Activated naive CD4-positive, alpha-beta T cell treated with anti-CD3 and anti-CD28 coated beads for 36 hours (primary cell): ENCODE measurements at regions of chr12 and their contacts with region 1.

Region 1: GRCh38 chr12:50763639-50764285 is at the start of gene ATF1:
- DNase-seq: peak; percentile 91
- H3K4me3 Mint-ChIP-seq: peak within 1 kb of the TSS; percentile 83
- H3K27ac Mint-ChIP-seq: peak within 1 kb of the TSS; percentile 94
- H3K4me1 Mint-ChIP-seq: peaks cover 33% of the 10 kb centered on the region
- H3K27me3 Mint-ChIP-seq: no peaks in the 10 kb centered on the region
- total RNA-seq, gene ATF1: 43.3 to 48.5 TPM

Region 2: GRCh38 chr12:50283229-50283923 is 480.4 kb before region 1 on chr12 and contains the start of gene LIMA1:
- CTCF ChIA-PET with region 1: interaction called, 3 read pairs
- intact Hi-C with region 1: loop called (anchors 1 kb)
- DNase-seq: peak; percentile 92
- H3K4me3 Mint-ChIP-seq: peak within 1 kb of the TSS; percentile 90
- H3K27ac Mint-ChIP-seq: peak within 1 kb of the TSS; percentile 72
- H3K4me1 Mint-ChIP-seq: peaks cover 13% of the 10 kb centered on the region
- H3K27me3 Mint-ChIP-seq: no peaks in the 10 kb centered on the region
- total RNA-seq, gene LIMA1: 15.9 to 16.5 TPM

Region 3: DNA sequence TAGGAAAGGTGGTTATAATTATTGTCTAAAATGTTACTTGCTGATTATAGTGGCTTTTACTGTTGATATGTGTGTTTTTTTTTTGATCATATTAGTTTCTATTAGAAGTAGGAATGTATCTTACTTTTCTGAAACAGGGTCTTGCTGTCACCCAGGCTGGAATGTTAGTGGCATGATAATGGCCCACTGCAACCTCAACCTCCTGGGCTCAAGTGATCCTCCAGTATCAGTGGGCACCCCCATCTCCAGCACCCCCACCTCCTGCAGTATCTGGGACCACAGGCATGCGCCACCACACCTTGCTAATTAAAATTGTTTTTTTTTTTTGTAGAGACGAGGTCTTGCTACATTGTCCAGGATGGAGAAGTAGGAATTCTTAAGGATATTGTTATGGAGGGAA is 11.5 kb after region 1 on chr12:
- CTCF ChIA-PET with region 1: interaction called, 12 read pairs
- intact Hi-C with region 1: no loop called
- DNase-seq: no peak
- H3K4me3 Mint-ChIP-seq: no peak overlapping the region
- H3K27ac Mint-ChIP-seq: no peak overlapping the region
- H3K4me1 Mint-ChIP-seq: peaks cover 30% of the 10 kb centered on the region
- H3K27me3 Mint-ChIP-seq: no peaks in the 10 kb centered on the region

Region 4: GRCh38 chr12:50986966-50987737 is 223.4 kb after region 1 on chr12:
- CTCF ChIA-PET with region 1: interaction called, 21 read pairs
- intact Hi-C with region 1: loop called (anchors 1 kb)
- DNase-seq: peak; percentile 64
- H3K4me3 Mint-ChIP-seq: no peak overlapping the region
- H3K27ac Mint-ChIP-seq: no peak overlapping the region
- H3K4me1 Mint-ChIP-seq: peaks cover 56% of the 10 kb centered on the region
- H3K27me3 Mint-ChIP-seq: no peaks in the 10 kb centered on the region

Region 5: DNA sequence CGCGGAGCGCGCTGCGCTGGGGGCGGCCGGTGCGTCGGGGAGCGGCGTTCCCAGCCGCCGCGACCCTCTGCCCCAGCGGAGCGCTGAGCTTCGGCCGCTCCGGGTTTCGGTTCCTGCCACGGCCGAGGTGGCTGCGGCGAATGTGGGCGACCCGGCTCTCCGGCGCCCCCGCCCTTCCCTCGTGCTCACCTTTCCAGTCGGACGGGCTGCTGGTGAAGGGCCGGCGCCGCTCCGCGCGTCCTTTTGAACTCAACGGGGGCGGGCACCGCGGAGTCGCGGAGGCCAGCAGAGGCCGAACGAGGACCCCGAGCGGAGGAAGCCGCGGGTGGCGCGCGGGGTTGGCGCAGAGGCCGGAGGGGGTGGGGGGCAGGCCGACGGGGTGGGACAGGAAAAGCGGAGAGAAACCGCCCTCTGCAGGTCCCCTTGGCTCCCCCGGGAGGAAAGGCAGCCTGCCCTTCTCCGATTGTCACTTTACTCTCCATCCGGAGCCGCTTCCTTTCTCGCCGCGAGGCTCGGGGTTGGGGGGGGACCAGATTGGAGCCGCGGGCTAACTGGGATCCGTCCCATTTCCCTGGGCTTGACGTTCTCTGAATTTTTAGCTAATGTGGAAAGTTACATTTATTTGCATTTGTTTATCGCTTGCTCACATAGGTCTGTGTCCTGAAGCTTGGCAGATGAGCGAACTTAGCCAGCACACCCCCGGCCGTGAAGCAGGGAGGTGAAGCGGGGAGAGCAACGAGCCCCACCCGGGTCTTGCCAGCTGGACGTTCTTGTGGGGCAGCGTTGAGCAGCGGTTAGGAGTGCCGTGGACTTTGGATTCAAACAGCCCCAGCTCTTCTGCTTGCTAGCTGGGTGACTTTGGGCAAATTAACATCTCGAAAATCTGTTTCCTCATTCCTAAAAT is 506.6 kb after region 1 on chr12 and contains the start of gene SMAGP:
- CTCF ChIA-PET with region 1: no interaction called
- intact Hi-C with region 1: loop called (anchors 10 kb)
- DNase-seq: peak; percentile 51
- H3K4me3 Mint-ChIP-seq: peak within 1 kb of the TSS; percentile 83
- H3K27ac Mint-ChIP-seq: no peak within 1 kb of the TSS
- H3K4me1 Mint-ChIP-seq: peaks cover 20% of the 10 kb centered on the region
- H3K27me3 Mint-ChIP-seq: peaks cover 8% of the 10 kb centered on the region
- total RNA-seq, gene SMAGP: 0.54 to 1.2 TPM

Region 6: DNA sequence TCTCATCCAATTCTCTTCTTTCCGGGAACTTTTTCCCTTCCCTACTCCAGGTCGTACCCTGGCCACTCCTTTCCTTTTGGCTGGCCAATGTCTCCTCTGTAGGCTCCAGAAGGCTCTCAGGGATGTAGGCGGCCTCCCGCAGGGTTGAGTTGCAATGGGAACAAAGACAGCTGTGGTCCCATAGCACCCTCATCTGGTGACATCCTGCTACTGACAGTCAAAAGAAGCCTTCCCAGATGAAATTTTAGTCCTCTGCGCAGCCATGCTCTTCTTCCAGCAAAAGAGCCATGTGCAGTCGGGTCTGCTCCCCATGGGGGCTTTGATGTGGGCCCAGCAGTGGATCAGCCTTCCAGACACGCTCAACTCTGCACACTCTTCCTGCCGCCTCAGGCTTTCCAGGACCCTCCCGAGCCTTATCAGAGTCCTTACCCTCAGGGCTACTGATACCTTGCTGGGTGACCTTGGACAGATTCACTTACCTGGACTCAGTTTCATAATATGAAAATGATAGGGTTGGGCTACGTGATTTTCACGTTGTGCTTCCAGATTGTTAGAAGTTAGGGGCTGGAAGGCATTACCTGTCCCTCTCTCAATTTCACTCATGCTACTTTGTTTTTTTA is 588.3 kb after region 1 on chr12:
- CTCF ChIA-PET with region 1: no interaction called
- intact Hi-C with region 1: no loop called
- DNase-seq: peak; percentile 68
- H3K4me3 Mint-ChIP-seq: no peak overlapping the region
- H3K27ac Mint-ChIP-seq: no peak overlapping the region
- H3K4me1 Mint-ChIP-seq: peaks cover 5% of the 10 kb centered on the region
- H3K27me3 Mint-ChIP-seq: no peaks in the 10 kb centered on the region